Esophagus muscularis mucosa (tissue), 4 donors: ENCODE measurements at regions of chr1 and their contacts with region 1.

Region 1: DNA sequence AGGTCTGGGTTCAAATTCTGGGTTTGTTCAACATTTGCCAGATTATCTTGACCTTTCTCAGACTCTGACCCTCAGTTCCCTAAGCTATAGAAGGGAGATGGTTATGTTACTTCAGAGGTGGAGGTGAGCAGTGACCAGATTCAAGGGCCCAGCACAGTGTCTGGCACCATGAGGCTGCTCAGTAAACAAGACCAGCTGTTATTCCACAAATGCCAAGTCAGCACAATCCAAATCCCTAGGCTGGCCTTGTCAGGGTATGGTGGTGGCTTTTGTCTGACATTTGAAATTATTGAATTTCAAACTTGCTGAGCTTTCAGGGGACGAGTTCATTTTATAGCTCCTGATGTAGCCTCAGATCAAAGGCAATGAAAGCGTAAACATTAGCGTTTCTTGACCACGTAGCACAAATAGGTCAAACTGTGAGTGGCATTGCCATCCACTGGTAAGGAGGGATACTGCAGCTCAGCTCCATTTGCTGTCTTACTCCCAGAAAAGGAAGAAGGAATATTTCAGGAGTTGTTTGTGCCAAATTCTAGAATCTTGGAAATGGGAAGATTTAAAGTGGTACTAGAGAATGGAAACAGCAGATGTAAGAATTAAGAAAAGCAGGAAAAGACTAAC is 94.3 kb upstream of the EDN2 start:
- DNase-seq: no peak
- H3K4me3 ChIP-seq: no peak overlapping the region
- H3K27ac ChIP-seq: no peak overlapping the region
- H3K4me1 ChIP-seq: peaks cover 0 to 7% (median 3%) of the 10 kb centered on the region in 4 donors
- H3K27me3 ChIP-seq: no peaks in the 10 kb centered on the region
- CTCF ChIP-seq: peak; percentile 33 to 45 (median 38)
- EP300 ChIP-seq: no peak
- POLR2A ChIP-seq: no peak

Region 2: GRCh38 chr1:42173155-42173933 is 594.5 kb after region 1 on chr1:
- intact Hi-C with region 1: loop called (anchors 5 kb)
- DNase-seq: no peak
- H3K4me3 ChIP-seq: no peak overlapping the region
- H3K27ac ChIP-seq: no peak overlapping the region
- H3K4me1 ChIP-seq: peaks cover 18 to 31% (median 19%) of the 10 kb centered on the region in 4 donors
- H3K27me3 ChIP-seq: peaks cover 0 to 14% (median 0%) of the 10 kb centered on the region in 4 donors
- CTCF ChIP-seq: peak; percentile 89 to 99 (median 92)
- EP300 ChIP-seq: no peak
- POLR2A ChIP-seq: no peak